Activated CD8-positive, alpha-beta T cell treated with anti-CD3 and anti-CD28 coated beads for 36 hours (primary cell): ENCODE measurements at regions of chr4 and their contacts with region 1.

Region 1: DNA sequence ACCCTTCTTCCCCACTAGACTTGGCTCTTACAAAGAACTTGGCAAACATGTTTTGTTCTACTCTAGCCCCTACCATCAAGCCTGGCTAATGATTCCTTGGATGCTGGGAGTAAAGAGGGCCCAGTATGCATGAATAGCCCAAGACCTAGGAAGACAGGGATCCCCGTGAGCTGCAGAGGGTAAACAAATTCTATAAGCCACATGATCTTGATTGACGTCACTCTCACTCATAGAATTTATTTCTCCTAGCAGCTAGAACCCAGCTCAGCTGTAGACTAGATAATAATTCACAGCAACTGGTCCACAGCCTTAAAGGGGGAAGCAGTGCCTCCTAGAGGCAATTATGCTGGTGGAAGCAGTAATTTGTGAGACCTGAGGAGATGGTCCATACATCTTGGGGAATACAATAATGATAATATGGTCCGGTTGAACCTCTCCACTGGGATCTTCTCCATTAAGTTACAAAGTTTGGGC is 16.1 kb upstream of the USO1 start:
- DNase-seq: peak; percentile 75
- ATAC-seq: peak; percentile 96
- H3K4me3 Mint-ChIP-seq: no peak overlapping the region
- H3K27ac Mint-ChIP-seq: peak overlapping the region; percentile 40
- H3K4me1 Mint-ChIP-seq: peaks cover 5% of the 10 kb centered on the region
- H3K27me3 Mint-ChIP-seq: no peaks in the 10 kb centered on the region
- CTCF ChIP-seq: peak; percentile 63

Region 2: GRCh38 chr4:75653845-75654503 is 54.3 kb before region 1 on chr4:
- CTCF ChIA-PET with region 1: interaction called, 21 read pairs
- POLR2A ChIA-PET with region 1: interaction called, 3 read pairs
- intact Hi-C with region 1: no loop called
- DNase-seq: no peak
- ATAC-seq: peak; percentile 11
- H3K4me3 Mint-ChIP-seq: peak overlapping the region; percentile 50
- H3K27ac Mint-ChIP-seq: peak overlapping the region; percentile 96
- H3K4me1 Mint-ChIP-seq: peaks cover 59% of the 10 kb centered on the region
- H3K27me3 Mint-ChIP-seq: no peaks in the 10 kb centered on the region
- CTCF ChIP-seq: peak; percentile 20

Region 3: GRCh38 chr4:75849461-75849860 is 141.2 kb after region 1 on chr4:
- CTCF ChIA-PET with region 1: no interaction called
- POLR2A ChIA-PET with region 1: no interaction called
- intact Hi-C with region 1: loop called (anchors 5 kb)
- DNase-seq: peak; percentile 5
- ATAC-seq: no peak
- H3K4me3 Mint-ChIP-seq: no peak overlapping the region
- H3K27ac Mint-ChIP-seq: no peak overlapping the region
- H3K4me1 Mint-ChIP-seq: peaks cover 12% of the 10 kb centered on the region
- H3K27me3 Mint-ChIP-seq: peaks cover 9% of the 10 kb centered on the region
- CTCF ChIP-seq: no peak